GM12878 (cell line): ENCODE measurements at regions of chr1 and their contacts with region 1.

Region 1: GRCh38 chr1:84467298-84467697 is 11.8 kb upstream of the RPF1 start:
- DNase-seq: no peak
- ATAC-seq: no peak
- H3K4me3 ChIP-seq: no peak overlapping the region
- H3K27ac ChIP-seq: no peak overlapping the region
- H3K4me1 ChIP-seq: no peaks in the 10 kb centered on the region
- H3K27me3 ChIP-seq: no peaks in the 10 kb centered on the region
- CTCF ChIP-seq: no peak
- EP300 ChIP-seq: no peak
- POLR2A ChIP-seq: no peak
- RAD21 ChIP-seq: no peak

Region 2: GRCh38 chr1:84478876-84479868 is 11.9 kb after region 1 on chr1 and contains the start of gene RPF1:
- CTCF ChIA-PET with region 1: no interaction called
- POLR2A ChIA-PET with region 1: no interaction called
- RAD21 ChIA-PET with region 1: no interaction called
- SMC1A ChIA-PET with region 1: interaction called, 12 read pairs
- in situ Hi-C with region 1: no loop called
- intact Hi-C with region 1: no loop called
- DNase-seq: peak; percentile 49
- ATAC-seq: peak; percentile 96
- H3K4me3 ChIP-seq: peak within 1 kb of the TSS; percentile 87
- H3K27ac ChIP-seq: peak within 1 kb of the TSS; percentile 80
- H3K4me1 ChIP-seq: no peaks in the 10 kb centered on the region
- H3K27me3 ChIP-seq: no peaks in the 10 kb centered on the region
- CTCF ChIP-seq: no peak
- EP300 ChIP-seq: no peak; a peak in 1 of 4 replicates
- POLR2A ChIP-seq: peak; percentile 78
- RAD21 ChIP-seq: no peak
- polyA plus RNA-seq, gene RPF1: 45.0 to 45.5 TPM